Activated T-helper 2 cell treated with anti-CD3 and anti-CD28 coated beads, Interferon-gamma antibody, Interleukin-2, Interleukin-4, amounts not matched to agents 10 μg/mL and 5 μg/mL and 100 μg/mL, durations not matched to agents 14 hours and 24 hours and 36 hours (primary cell): ENCODE measurements at regions of chr1 and their contacts with region 1.

Region 1: DNA sequence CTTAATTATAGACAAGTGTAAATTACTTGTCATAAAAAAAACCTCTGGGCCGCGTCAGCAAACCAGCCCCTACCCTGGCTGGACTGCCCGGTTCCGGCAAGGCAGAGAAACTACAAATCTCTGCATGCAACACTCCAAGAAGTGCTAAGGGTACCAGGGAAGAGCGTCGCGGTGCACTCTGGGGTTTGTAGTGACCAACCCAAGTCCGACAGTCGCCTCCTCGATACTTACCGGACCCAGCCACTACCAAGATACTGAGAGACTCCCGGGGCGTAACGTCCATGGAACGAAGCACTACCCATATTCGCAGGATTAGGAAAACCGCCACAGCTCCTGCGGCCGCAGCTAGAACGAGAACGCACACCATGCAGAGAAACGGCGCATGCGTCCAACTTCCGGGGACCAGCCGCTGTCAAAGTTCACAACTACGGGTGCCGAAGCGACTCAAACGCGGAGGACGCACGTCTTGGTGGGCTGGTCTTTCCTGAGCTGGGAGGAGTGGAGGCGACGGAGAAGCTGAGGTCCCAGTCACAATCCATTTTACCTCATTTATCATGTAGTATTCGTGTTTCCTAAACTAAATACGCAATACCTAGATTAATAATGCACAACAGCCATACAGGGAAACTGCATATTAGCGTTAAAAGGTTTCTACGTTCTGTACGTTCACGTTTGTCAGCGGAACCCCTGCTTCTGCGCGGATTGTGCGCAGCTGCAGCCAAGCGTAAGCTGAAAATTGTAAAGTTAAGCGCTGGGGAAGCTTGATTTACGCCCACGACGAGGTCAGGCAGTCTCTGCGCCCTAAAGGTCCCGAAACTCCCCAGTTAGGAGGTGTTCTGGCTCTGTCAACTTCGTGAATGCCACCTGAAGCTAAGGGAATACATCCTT is at the start of gene ALG14:
- DNase-seq: peak; percentile 88
- H3K4me3 Mint-ChIP-seq: peak within 1 kb of the TSS; percentile 98
- H3K27ac Mint-ChIP-seq: peak within 1 kb of the TSS; percentile 95
- H3K4me1 Mint-ChIP-seq: peaks cover 11% of the 10 kb centered on the region
- H3K27me3 Mint-ChIP-seq: no peaks in the 10 kb centered on the region
- total RNA-seq, gene ALG14: 2.4 and 3.1 TPM in 2 replicates

Region 2: GRCh38 chr1:94602316-94602715 is 470.5 kb before region 1 on chr1:
- intact Hi-C with region 1: loop called (anchors 5 kb)
- DNase-seq: peak; percentile 40
- H3K4me3 Mint-ChIP-seq: peak overlapping the region; percentile 34
- H3K27ac Mint-ChIP-seq: no peak overlapping the region
- H3K4me1 Mint-ChIP-seq: peaks cover 23% of the 10 kb centered on the region
- H3K27me3 Mint-ChIP-seq: peaks cover 20% of the 10 kb centered on the region

Region 3: GRCh38 chr1:95043141-95043980 is 29.4 kb before region 1 on chr1:
- intact Hi-C with region 1: loop called (anchors 2 kb)
- DNase-seq: peak; percentile 66
- H3K4me3 Mint-ChIP-seq: no peak overlapping the region
- H3K27ac Mint-ChIP-seq: no peak overlapping the region
- H3K4me1 Mint-ChIP-seq: no peaks in the 10 kb centered on the region
- H3K27me3 Mint-ChIP-seq: no peaks in the 10 kb centered on the region

Region 4: GRCh38 chr1:95084317-95085176 is 11.8 kb after region 1 on chr1:
- intact Hi-C with region 1: loop called (anchors 1 kb)
- DNase-seq: no peak
- H3K4me3 Mint-ChIP-seq: no peak overlapping the region
- H3K27ac Mint-ChIP-seq: no peak overlapping the region
- H3K4me1 Mint-ChIP-seq: peaks cover 1% of the 10 kb centered on the region
- H3K27me3 Mint-ChIP-seq: peaks cover 20% of the 10 kb centered on the region

Region 5: GRCh38 chr1:95207223-95207935 is 134.6 kb after region 1 on chr1:
- intact Hi-C with region 1: no loop called
- DNase-seq: no peak
- H3K4me3 Mint-ChIP-seq: no peak overlapping the region
- H3K27ac Mint-ChIP-seq: no peak overlapping the region
- H3K4me1 Mint-ChIP-seq: no peaks in the 10 kb centered on the region
- H3K27me3 Mint-ChIP-seq: no peaks in the 10 kb centered on the region

Region 6: GRCh38 chr1:95233737-95234500 is 161.1 kb after region 1 on chr1 and contains the start of gene RWDD3:
- intact Hi-C with region 1: loop called (anchors 1 kb)
- DNase-seq: peak; percentile 91
- H3K4me3 Mint-ChIP-seq: peak within 1 kb of the TSS; percentile 95
- H3K27ac Mint-ChIP-seq: peak within 1 kb of the TSS; percentile 89
- H3K4me1 Mint-ChIP-seq: peaks cover 30% of the 10 kb centered on the region
- H3K27me3 Mint-ChIP-seq: peaks cover 27% of the 10 kb centered on the region
- total RNA-seq, gene RWDD3: 11.7 and 15.5 TPM in 2 replicates